ENCODE measurements at regions of chr12 and their contacts with region 1.

Region 1: DNA sequence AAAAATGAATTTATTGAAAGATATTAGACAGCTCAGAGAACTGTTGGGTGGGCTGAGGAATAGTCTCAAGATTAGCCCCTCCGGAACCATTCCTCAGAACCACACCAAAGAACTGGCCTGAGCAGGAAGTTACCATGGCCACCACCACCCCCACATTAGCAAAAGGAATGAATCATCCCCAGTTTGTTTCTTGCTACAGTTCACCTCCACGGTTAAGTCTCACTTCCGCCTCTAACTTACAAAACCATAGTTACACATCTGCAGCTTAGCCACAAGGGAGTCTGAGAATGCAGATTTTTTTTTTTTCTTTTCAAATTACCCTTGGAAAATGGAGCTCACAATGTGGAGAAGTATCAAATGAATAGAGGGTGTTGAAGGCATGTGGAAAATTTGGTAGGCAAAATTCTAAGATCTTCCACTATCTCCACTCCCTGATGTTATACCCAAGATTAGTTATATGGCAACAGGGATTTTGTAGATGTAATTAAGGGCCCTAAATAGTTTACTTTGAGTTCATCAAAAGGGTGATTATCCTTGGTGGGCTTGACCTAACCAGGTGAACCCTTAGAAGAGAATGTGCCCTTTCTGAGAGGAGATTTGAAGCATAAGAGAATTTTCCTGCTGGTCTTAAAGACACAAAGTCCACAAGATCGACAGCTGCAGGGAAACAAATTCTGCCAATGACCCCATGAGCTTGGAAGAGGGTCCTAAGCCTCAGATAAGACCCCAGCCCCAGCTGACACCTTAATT is 129.8 kb upstream of the KRR1 start:
- DNase-seq: peak; percentile 27
- H3K4me3 Mint-ChIP-seq: no peak overlapping the region
- H3K27ac Mint-ChIP-seq: peak overlapping the region; percentile 76
- H3K4me1 Mint-ChIP-seq: peaks cover 46% of the 10 kb centered on the region
- H3K27me3 Mint-ChIP-seq: peaks cover 12% of the 10 kb centered on the region

Region 2: GRCh38 chr12:75658901-75659383 is 17.7 kb after region 1 on chr12:
- intact Hi-C with region 1: loop called (anchors 1 kb)
- DNase-seq: peak; percentile 9
- H3K4me3 Mint-ChIP-seq: no peak overlapping the region
- H3K27ac Mint-ChIP-seq: peak overlapping the region; percentile 5
- H3K4me1 Mint-ChIP-seq: peaks cover 34% of the 10 kb centered on the region
- H3K27me3 Mint-ChIP-seq: peaks cover 6% of the 10 kb centered on the region

Region 3: DNA sequence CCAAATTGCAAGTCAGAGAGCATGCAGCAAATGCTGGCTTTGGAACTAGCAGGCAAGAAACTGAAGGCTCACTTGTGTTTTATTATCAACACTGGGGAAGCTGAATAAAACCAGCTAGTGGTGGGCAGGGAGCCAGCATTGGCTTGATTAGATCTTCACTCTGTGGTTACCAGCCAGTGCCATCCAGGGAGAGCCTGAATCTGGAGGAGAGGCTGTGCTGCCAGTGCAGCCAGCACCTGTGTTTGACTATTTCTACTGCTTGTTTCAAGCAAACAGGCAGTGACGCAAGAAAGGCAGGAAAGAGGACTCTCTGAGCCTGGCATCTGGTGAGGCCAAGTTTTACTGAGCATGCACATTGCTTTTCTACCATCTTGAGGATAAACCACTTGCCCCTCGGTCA is 143.4 kb after region 1 on chr12:
- intact Hi-C with region 1: loop called (anchors 5 kb)
- DNase-seq: no peak
- H3K4me3 Mint-ChIP-seq: no peak overlapping the region
- H3K27ac Mint-ChIP-seq: no peak overlapping the region
- H3K4me1 Mint-ChIP-seq: peaks cover 18% of the 10 kb centered on the region
- H3K27me3 Mint-ChIP-seq: peaks cover 6% of the 10 kb centered on the region

Measured in activated T-helper 2 cell treated with anti-CD3 and anti-CD28 coated beads, Interferon-gamma antibody, Interleukin-2, Interleukin-4, amounts not matched to agents 10 μg/mL and 5 μg/mL and 100 μg/mL, durations not matched to agents 14 hours and 24 hours and 36 hours (primary cell).